HEK293 (cell line): ENCODE measurements at regions of chr12 and their contacts with region 1.

Region 1: DNA sequence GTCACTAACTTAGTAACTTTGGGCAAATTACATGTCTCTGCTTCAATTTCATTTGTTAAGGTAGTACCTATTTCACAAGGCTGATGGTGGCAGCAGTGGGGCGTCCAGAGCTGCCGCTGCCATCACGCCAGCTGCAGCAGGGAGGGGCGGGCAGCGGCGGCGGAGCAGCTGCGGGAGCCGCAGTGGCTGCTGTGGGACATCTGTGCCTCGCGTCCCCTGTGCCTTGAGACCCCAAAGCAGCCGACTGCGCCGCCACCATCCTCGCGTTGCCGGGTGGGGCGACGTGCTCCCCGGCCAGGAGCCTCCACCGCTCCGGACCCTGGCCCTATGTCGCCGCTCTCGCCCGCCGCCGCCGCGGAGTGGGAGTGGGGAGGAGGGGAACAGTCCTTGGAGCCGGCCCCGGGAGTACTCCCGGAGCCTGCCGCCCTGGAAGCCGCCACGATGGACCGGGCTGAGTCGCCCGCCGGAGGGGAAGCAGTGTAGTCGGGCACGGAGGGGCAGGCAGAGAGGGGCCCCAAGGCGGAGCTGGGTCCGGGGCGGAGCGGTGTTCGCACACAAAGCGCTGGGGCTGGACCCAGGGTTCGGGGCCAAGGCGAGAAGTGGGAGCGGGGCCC is 51.4 kb downstream of the A2M start:
- H3K4me3 ChIP-seq: peak overlapping the region; percentile 86
- H3K27ac ChIP-seq: peak overlapping the region; percentile 88
- H3K4me1 ChIP-seq: peaks cover 5% of the 10 kb centered on the region
- CTCF ChIP-seq: peak; percentile 68

Region 2: DNA sequence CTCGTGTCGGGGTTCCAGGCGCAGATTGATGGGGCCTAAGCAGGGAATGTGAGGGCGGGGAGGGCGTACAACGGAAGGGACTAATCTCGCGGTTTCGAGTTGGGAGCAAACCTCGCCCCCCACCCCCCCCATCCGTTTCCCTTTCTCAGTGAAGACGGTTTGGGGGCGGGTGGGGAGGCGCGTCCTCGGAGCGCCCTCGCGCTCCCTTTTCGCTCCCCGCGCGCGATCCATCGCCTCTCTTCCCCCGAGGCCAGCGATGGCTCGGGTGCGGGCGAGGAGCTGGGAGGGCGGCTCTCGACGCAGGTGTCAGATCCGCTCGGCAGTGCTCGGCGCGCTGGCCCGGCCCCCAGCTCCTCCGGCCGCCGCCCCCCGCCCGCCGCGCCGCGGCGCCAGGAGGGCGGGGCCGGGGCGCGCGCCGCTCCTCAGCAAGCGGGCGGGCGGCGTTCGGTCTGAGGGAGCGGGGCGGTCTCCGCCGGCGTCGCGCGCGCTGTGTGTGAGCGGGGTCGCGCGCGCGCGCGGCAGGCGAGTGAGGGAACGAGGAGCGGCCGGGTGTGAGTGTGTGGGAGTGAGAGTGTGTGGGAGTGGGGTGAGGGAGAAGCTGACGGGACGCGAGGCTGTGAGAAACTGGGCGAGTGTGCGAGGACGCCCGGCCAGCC is 366.7 kb before region 1 on chr12 and contains the start of gene RIMKLB:
- CTCF ChIA-PET with region 1: no interaction called
- POLR2A ChIA-PET with region 1: no interaction called
- H3K4me3 ChIP-seq: peak within 1 kb of the TSS; percentile 94
- H3K27ac ChIP-seq: peak within 1 kb of the TSS; percentile 94
- H3K4me1 ChIP-seq: peaks cover 19% of the 10 kb centered on the region
- CTCF ChIP-seq: no peak

Region 3: GRCh38 chr12:9049520-9050133 is 14.7 kb before region 1 on chr12:
- CTCF ChIA-PET with region 1: interaction called, 18 read pairs
- POLR2A ChIA-PET with region 1: no interaction called
- H3K4me3 ChIP-seq: no peak overlapping the region
- H3K27ac ChIP-seq: no peak overlapping the region
- H3K4me1 ChIP-seq: no peaks in the 10 kb centered on the region
- CTCF ChIP-seq: no peak